ENCODE measurements at regions of chr3 and their contacts with region 1.

Region 1: GRCh38 chr3:107927361-107928083 is 163.3 kb downstream of the CD47 start:
- DNase-seq: peak; percentile 81
- H3K4me3 ChIP-seq: peak overlapping the region; percentile 67 to 73 (median 68)
- H3K27ac ChIP-seq: no peak overlapping the region
- H3K4me1 ChIP-seq: peaks cover 11% of the 10 kb centered on the region
- H3K27me3 ChIP-seq: peaks cover 0 to 2% of the 10 kb centered on the region in 2 experiments
- CTCF ChIP-seq: peak; percentile 93 to 96
- POLR2A ChIP-seq: no peak

Region 2: DNA sequence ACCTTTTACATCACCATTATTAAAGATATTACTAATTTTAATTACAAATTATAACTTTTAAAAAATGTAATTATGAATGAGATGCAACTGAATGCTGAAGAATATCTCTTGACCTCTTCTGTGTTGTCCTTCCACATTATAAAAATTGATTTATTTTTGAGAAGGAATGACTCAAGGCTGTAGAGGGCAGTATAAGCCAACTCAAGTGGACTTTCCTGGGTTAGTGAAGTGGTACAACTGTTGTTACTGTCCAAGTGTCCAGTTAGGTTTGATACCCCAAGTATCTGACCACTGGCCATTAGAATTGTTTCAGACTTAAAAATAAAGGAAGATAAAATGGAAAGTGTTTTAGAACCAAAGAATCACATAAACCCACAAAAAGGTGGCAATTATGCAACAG is 352.9 kb before region 1 on chr3:
- CTCF ChIA-PET with region 1: interaction called, 16 read pairs
- POLR2A ChIA-PET with region 1: no interaction called
- dilution Hi-C with region 1: no loop called
- intact Hi-C with region 1: loop called (anchors 1 kb)
- DNase-seq: peak; percentile 66
- H3K4me3 ChIP-seq: no peak overlapping the region
- H3K27ac ChIP-seq: no peak overlapping the region
- H3K4me1 ChIP-seq: no peaks in the 10 kb centered on the region
- H3K27me3 ChIP-seq: no peaks in the 10 kb centered on the region
- CTCF ChIP-seq: peak; percentile 33 to 46
- POLR2A ChIP-seq: no peak

Region 3: DNA sequence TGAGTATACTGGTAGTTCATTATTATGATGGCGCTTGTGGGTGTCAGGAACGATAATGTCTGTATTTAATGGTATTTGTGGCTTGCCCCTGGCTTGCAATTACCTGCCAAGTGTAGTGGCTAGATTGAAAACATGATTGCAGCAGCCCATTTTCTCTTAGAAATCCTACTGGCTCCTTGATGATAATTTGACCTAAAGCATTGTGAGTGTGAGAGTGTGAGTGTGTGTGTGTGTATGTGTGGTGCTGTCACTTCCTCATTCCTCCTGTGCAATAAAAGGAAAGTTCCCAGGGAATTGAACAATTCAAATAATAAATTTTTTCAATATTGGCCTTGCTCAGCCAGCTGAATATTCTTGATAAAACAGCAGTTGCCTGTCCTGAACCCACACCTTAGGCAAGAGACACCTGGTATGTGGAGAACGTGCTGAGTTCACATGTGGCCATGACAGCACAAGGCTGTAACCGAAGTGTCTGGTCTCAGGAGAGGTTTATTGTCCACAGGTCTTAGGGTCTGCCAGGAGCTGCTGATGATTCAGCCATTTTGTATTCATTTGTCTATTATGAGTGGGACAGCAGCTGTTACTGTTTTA is 30.0 kb before region 1 on chr3:
- CTCF ChIA-PET with region 1: interaction called, 14 read pairs
- POLR2A ChIA-PET with region 1: no interaction called
- dilution Hi-C with region 1: no loop called
- intact Hi-C with region 1: no loop called
- DNase-seq: no peak
- H3K4me3 ChIP-seq: no peak overlapping the region
- H3K27ac ChIP-seq: no peak overlapping the region
- H3K4me1 ChIP-seq: no peaks in the 10 kb centered on the region
- H3K27me3 ChIP-seq: peaks cover 6 to 7% of the 10 kb centered on the region in 2 experiments
- CTCF ChIP-seq: no peak
- POLR2A ChIP-seq: no peak

Region 4: DNA sequence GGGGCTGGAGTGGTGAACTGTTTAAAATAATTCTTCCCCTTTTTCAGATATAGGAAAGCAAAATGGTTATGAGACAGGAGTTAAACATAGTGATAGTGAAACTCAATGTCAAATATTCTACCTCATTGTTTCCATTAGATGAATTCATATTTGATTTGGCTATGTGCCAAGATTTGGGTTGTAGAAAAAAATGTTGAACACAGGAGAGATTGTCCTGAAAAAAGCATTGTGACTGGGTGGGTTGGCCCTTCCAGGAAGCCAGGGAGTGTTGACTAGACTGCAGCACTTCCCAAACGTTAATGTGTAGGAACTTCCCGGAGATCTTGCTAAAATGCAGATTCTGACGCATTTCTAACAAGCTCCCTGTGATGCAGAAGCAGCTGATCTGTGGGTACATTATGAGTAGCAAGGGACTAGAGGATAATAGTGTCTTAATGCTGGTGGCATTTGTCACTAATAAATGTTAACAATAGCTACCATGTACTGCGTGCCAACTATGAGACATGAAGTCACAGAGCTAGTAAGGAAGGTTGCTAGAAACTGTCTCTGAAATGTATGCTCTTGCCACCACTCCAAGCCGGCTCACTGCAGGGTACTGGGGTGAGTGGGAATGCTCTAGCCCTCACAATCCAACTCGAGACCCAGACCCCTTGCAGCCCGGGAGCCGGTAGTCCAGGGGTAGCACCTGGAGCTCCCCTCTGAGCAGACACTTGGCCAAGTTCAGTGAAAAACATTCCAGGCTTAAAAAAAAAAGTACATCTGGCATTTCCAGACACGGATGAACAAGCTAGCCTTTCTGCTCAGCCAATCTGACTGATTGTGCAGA is 42.7 kb after region 1 on chr3:
- CTCF ChIA-PET with region 1: interaction called, 10 read pairs
- POLR2A ChIA-PET with region 1: no interaction called
- dilution Hi-C with region 1: no loop called
- intact Hi-C with region 1: no loop called
- DNase-seq: peak; percentile 92
- H3K4me3 ChIP-seq: no peak overlapping the region
- H3K27ac ChIP-seq: peak overlapping the region; percentile 25
- H3K4me1 ChIP-seq: peaks cover 16% of the 10 kb centered on the region
- H3K27me3 ChIP-seq: no peaks in the 10 kb centered on the region
- CTCF ChIP-seq: no peak
- POLR2A ChIP-seq: no peak

Region 5: DNA sequence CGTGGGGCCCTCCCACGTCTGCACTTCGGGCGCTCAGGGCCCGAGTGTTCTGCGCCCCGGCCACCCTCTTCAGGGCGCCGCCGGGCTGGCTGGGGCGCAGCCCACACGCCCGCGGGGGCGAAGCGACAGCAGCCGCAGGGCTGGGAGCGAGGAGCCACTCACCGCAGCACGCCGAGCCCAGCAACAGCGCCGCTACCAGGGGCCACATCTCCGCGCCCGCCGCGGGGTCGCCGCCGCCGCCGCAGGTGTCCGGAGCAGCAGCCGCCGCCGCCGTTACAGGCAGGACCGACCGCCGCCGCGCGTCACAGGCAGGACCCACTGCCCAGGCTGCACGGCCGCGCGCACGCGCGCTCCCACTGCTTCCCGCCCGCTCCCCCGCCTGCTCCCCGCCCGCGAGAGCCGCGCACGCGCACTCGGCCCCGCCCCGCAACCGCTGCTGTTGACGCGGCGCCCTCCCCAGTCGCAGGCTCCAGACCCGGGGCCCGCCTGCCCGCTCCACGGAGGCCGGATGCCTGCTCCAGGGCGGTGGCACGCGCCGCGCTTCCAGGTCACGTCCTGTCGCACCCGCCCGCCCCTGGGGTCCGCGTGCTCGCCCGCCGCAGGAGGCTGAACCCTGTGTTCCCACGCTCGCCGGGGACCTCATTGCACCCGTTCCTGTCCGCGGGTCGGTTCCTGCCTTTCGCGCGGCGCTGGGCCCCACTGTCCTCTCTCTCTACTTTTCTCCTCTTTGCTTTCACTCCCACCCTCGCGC is 163.4 kb after region 1 on chr3 and contains the start of gene CD47:
- CTCF ChIA-PET with region 1: interaction called, 10 read pairs
- POLR2A ChIA-PET with region 1: no interaction called
- dilution Hi-C with region 1: no loop called
- intact Hi-C with region 1: loop called (anchors 1 kb)
- DNase-seq: peak; percentile 94
- H3K4me3 ChIP-seq: peak within 1 kb of the TSS; percentile 82 to 93 (median 90)
- H3K27ac ChIP-seq: peak within 1 kb of the TSS; percentile 51
- H3K4me1 ChIP-seq: peaks cover 12% of the 10 kb centered on the region
- H3K27me3 ChIP-seq: peaks cover 2 to 6% of the 10 kb centered on the region in 2 experiments
- CTCF ChIP-seq: no peak
- POLR2A ChIP-seq: peak; percentile 74
- total RNA-seq, gene CD47: 30.3 and 32.2 TPM in 2 replicates

Region 6: DNA sequence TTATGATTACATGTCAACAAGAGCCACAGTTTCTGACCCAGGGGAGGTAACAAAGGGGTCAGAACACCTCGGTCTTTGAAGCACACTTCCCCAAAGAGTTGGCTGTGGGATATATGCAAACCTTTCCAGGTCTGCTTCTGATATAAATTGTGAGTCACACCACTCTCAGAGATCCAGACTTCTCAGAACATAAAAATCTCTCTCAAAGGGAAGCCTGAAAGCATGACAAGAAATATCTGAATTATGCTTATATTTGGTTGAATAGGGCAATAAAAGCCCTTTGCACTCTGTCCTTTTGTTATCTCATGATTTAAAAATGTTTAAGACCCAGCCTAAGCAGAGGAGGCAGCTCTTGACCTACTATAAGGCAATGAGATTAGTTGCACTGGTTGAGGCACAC is 526.0 kb after region 1 on chr3:
- CTCF ChIA-PET with region 1: no interaction called
- POLR2A ChIA-PET with region 1: no interaction called
- dilution Hi-C with region 1: no loop called
- intact Hi-C with region 1: no loop called
- DNase-seq: no peak
- H3K4me3 ChIP-seq: no peak overlapping the region
- H3K27ac ChIP-seq: no peak overlapping the region
- H3K4me1 ChIP-seq: peaks cover 4% of the 10 kb centered on the region
- H3K27me3 ChIP-seq: no peaks in the 10 kb centered on the region
- CTCF ChIP-seq: no peak
- POLR2A ChIP-seq: no peak

Region 7: GRCh38 chr3:108552267-108553159 is 625.0 kb after region 1 on chr3:
- CTCF ChIA-PET with region 1: interaction called, 10 read pairs
- POLR2A ChIA-PET with region 1: no interaction called
- dilution Hi-C with region 1: no loop called
- intact Hi-C with region 1: loop called (anchors 5 kb)
- DNase-seq: peak; percentile 68
- H3K4me3 ChIP-seq: no peak overlapping the region
- H3K27ac ChIP-seq: no peak overlapping the region
- H3K4me1 ChIP-seq: peaks cover 12% of the 10 kb centered on the region
- H3K27me3 ChIP-seq: no peaks in the 10 kb centered on the region
- CTCF ChIP-seq: peak; percentile 21 to 31
- POLR2A ChIP-seq: no peak